ENCODE measurements at regions of chr7 and their contacts with region 1.

Region 1: DNA sequence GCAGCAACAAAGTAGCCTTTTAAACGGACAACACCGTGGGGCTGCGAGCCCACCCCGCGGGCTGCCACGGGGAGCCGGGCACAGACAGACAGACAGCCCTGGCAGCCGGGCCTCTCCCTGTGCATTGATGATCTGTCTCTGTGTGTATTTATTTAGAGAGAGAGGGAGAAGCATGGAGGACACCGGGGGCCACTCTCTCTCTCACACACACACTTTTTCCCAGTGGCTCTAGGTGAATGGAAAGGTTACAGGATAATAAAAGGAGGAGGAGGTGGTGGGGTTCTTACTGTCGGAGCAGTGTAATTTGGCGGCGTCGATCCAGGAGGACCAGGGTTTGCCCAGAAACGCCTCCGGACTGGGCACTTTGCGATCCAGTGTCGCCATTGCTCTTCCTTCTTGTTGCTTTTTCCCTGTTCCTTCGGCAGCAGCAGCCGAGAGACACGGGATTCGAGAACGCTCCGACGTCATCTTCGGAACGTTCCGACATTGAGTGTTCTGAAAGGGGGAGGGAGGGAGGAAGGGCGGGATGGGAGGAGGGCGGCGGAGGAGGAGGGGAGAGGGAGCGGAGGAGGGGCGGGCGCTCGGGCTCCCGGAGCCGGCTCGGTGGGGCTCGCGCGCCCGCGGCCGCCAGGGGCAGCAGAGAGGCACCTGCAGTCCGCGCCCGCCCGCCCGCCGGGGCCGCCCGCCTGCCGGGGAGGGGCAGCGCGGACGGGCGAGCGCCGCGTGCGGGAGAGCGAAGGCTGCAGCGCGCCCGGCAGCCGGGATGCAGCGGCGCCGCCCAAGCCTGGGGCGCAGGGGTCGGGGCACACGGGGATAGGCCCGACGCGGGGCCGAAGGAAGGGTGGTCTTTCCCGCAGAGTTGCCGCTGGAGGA is at the start of gene ATXN7L1:
- DNase-seq: peak; percentile 96
- H3K4me3 ChIP-seq: peak within 1 kb of the TSS; percentile 77 to 96 (median 84)
- H3K27ac ChIP-seq: peak within 1 kb of the TSS; percentile 91 to 94 (median 92)
- H3K4me1 ChIP-seq: peaks cover 5 to 31% (median 22%) of the 10 kb centered on the region in 4 donors
- H3K27me3 ChIP-seq: no peaks in the 10 kb centered on the region
- CTCF ChIP-seq: peak in 4 of 5 experiments; percentile 6 to 62 (median 54)
- EP300 ChIP-seq: no peak
- POLR2A ChIP-seq: peak; percentile 79
- total RNA-seq, gene ATXN7L1: 12.3 to 28.8 (median 21.0) TPM

Region 2: GRCh38 chr7:105652359-105652993 is 223.9 kb before region 1 on chr7:
- in situ Hi-C with region 1: no loop called
- intact Hi-C with region 1: loop called (anchors 10 kb)
- DNase-seq: peak; percentile 83
- H3K4me3 ChIP-seq: no peak overlapping the region
- H3K27ac ChIP-seq: no peak overlapping the region
- H3K4me1 ChIP-seq: peaks cover 7 to 16% (median 10%) of the 10 kb centered on the region in 4 donors
- H3K27me3 ChIP-seq: no peaks in the 10 kb centered on the region
- CTCF ChIP-seq: peak; percentile 78 to 86 (median 83)
- EP300 ChIP-seq: no peak
- POLR2A ChIP-seq: no peak

Region 3: GRCh38 chr7:106009403-106010226 is 133.3 kb after region 1 on chr7:
- in situ Hi-C with region 1: no loop called
- intact Hi-C with region 1: loop called (anchors 5 kb)
- DNase-seq: peak; percentile 90
- H3K4me3 ChIP-seq: no peak overlapping the region
- H3K27ac ChIP-seq: peak overlapping the region; percentile 40 to 61 (median 51)
- H3K4me1 ChIP-seq: peaks cover 4 to 19% (median 15%) of the 10 kb centered on the region in 4 donors
- H3K27me3 ChIP-seq: no peaks in the 10 kb centered on the region
- CTCF ChIP-seq: peak; percentile 95 to 98 (median 97)
- EP300 ChIP-seq: no peak
- POLR2A ChIP-seq: no peak